ENCODE measurements at regions of chr4 and their contacts with region 1.

Region 1: GRCh38 chr4:128718768-128719167 is 90.7 kb upstream of the JADE1 start:
- DNase-seq: no peak
- H3K4me3 ChIP-seq: no peak overlapping the region
- H3K27ac ChIP-seq: no peak overlapping the region
- H3K4me1 ChIP-seq: peaks cover 10% of the 10 kb centered on the region
- H3K27me3 ChIP-seq: no peaks in the 10 kb centered on the region
- CTCF ChIP-seq: no peak
- POLR2A ChIP-seq: no peak

Region 2: GRCh38 chr4:128782076-128782715 is 63.4 kb after region 1 on chr4:
- intact Hi-C with region 1: loop called (anchors 2 kb)
- DNase-seq: no peak
- H3K4me3 ChIP-seq: no peak overlapping the region
- H3K27ac ChIP-seq: no peak overlapping the region
- H3K4me1 ChIP-seq: no peaks in the 10 kb centered on the region
- H3K27me3 ChIP-seq: no peaks in the 10 kb centered on the region
- CTCF ChIP-seq: no peak
- POLR2A ChIP-seq: no peak